A549 (cell line): ENCODE measurements at regions of chr19 and their contacts with region 1.

Region 1: GRCh38 chr19:1551068-1552040 is 16.8 kb downstream of the MEX3D start:
- DNase-seq: no peak
- ATAC-seq: no peak
- H3K4me3 ChIP-seq: no peak overlapping the region
- H3K27ac ChIP-seq: no peak overlapping the region
- H3K4me1 ChIP-seq: no peaks in the 10 kb centered on the region
- CTCF ChIP-seq: no peak
- EP300 ChIP-seq: no peak
- POLR2A ChIP-seq: no peak
- RAD21 ChIP-seq: no peak

Region 2: DNA sequence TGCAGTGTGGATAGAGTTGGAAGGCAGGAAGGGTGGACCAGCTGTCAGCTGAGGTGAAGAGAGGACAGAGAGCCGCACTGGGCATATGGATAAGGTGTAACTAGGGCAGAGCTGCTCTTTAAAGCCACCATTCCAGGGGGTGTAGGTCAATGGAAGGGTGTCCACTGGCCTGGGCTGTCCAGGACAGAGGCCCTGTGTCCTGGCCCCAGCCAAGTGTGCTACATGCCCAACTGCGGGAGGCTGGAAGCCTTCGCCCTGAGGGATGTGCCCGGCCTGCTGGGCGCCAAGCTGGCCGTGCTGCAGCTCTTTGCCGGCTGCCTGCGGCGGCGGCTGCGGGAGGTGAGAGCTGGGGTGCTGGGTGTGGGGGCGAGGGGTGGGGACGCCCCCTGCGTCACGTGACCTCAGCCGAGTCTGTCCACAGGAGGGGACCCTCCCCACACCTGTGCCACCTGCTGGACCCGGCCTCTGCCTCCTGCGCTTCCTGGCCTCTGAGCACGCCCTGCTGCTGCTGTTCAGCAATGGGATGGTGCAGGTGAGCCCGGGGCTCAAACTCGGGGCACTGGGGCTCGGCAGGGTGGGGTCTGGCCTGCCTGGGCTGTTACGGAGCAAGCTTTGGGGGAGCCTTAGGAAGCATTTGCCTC is 17.7 kb before region 1 on chr19:
- CTCF ChIA-PET with region 1: interaction called, 19 read pairs
- POLR2A ChIA-PET with region 1: no interaction called
- DNase-seq: no peak
- ATAC-seq: peak; percentile 44 to 49; a peak in 3 of 6 replicates
- H3K4me3 ChIP-seq: no peak overlapping the region
- H3K27ac ChIP-seq: no peak overlapping the region
- H3K4me1 ChIP-seq: no peaks in the 10 kb centered on the region
- CTCF ChIP-seq: no peak
- EP300 ChIP-seq: no peak
- POLR2A ChIP-seq: no peak
- RAD21 ChIP-seq: no peak

Region 3: GRCh38 chr19:1566513-1567115 is 15.3 kb after region 1 on chr19:
- CTCF ChIA-PET with region 1: interaction called, 19 read pairs
- POLR2A ChIA-PET with region 1: no interaction called
- DNase-seq: peak; percentile 50 to 69
- ATAC-seq: peak; percentile 61 to 89
- H3K4me3 ChIP-seq: peak overlapping the region; percentile 76
- H3K27ac ChIP-seq: peak overlapping the region; percentile 82 to 92
- H3K4me1 ChIP-seq: peaks cover 4% of the 10 kb centered on the region; the same call in 1 of the 3 replicates
- CTCF ChIP-seq: no peak
- EP300 ChIP-seq: no peak
- POLR2A ChIP-seq: peak; percentile 24; the same call in 1 of the 2 replicates
- RAD21 ChIP-seq: no peak